MCF 10A (cell line): ENCODE measurements at regions of chr14 and their contacts with region 1.

Region 1: GRCh38 chr14:45267071-45267470 is 14.1 kb upstream of the MIS18BP1 start:
- DNase-seq: no peak
- H3K4me3 Mint-ChIP-seq: no peak overlapping the region
- H3K27ac Mint-ChIP-seq: peak overlapping the region; percentile 10
- H3K4me1 Mint-ChIP-seq: no peaks in the 10 kb centered on the region
- H3K27me3 Mint-ChIP-seq: no peaks in the 10 kb centered on the region
- CTCF ChIP-seq: no peak

Region 2: DNA sequence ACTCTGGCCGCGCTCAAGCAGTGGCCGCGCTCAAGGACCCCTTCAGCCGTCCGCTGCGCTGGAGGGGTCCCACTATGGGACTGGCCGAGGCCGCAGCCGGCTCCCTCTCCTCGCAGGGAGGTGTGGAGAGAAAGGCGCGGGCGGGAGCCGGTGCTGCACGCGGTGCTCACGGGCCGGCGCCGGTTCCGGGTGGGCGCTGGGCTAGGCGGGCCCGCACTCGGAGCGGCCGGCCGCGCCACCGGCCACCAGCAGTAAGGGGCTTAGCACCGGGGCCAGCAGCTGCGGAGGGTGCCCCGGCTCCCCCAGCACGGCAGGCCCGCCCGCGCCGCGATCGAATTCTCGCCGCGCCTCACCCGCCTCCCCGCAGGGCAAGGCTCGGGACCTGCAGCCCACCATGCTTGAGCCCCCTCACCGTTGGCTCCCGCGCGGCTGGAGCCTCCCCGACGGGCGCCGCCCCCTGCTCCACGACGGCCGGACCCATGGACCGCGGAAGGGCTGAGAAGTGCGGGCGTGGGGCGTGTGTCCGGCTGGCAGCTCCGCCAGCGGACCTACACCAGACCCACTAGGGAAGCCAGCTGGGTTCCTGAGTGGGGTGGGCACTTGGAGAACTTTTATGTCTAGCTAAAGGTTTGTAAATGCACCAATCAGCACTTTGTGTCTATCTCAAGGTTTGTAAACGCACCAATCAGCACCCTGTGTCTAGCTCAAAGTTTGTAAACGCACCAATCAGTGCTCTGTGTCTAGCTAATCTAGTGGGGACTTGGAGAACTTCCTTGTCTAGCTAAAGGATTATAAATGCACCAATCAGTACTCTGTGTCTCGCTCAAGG is 354.8 kb before region 1 on chr14:
- CTCF ChIA-PET with region 1: interaction called, 136 read pairs
- POLR2A ChIA-PET with region 1: interaction called, 10 read pairs
- intact Hi-C with region 1: loop called (anchors 1 kb)
- DNase-seq: no peak
- H3K4me3 Mint-ChIP-seq: no peak overlapping the region
- H3K27ac Mint-ChIP-seq: no peak overlapping the region
- H3K4me1 Mint-ChIP-seq: no peaks in the 10 kb centered on the region
- H3K27me3 Mint-ChIP-seq: no peaks in the 10 kb centered on the region
- CTCF ChIP-seq: no peak

Region 3: DNA sequence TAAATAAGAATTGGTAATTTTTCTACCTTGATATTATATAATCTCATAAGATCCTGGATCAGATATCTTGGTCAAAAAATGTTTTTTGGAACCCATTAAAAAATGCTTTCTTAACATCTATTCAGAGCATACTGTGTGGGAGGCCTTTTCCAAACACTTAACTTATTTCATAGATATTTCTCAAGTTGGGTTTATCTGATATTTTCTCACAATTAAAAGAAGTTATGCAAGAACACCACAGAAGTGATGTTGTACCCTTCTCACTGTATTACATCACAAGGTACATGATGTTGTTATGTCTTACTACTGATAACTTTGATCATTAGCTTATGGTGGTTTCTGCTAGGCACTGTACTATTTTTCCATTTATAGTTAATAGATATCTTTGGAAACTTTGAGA is 206.5 kb before region 1 on chr14:
- CTCF ChIA-PET with region 1: no interaction called
- POLR2A ChIA-PET with region 1: no interaction called
- intact Hi-C with region 1: no loop called
- DNase-seq: no peak
- H3K4me3 Mint-ChIP-seq: no peak overlapping the region
- H3K27ac Mint-ChIP-seq: no peak overlapping the region
- H3K4me1 Mint-ChIP-seq: no peaks in the 10 kb centered on the region
- H3K27me3 Mint-ChIP-seq: no peaks in the 10 kb centered on the region
- CTCF ChIP-seq: no peak

Region 4: GRCh38 chr14:45112889-45113781 is 153.9 kb before region 1 on chr14:
- CTCF ChIA-PET with region 1: interaction called, 10 read pairs
- POLR2A ChIA-PET with region 1: no interaction called
- intact Hi-C with region 1: no loop called
- DNase-seq: no peak
- H3K4me3 Mint-ChIP-seq: no peak overlapping the region
- H3K27ac Mint-ChIP-seq: peak overlapping the region; percentile 3
- H3K4me1 Mint-ChIP-seq: no peaks in the 10 kb centered on the region
- H3K27me3 Mint-ChIP-seq: no peaks in the 10 kb centered on the region
- CTCF ChIP-seq: no peak

Region 5: DNA sequence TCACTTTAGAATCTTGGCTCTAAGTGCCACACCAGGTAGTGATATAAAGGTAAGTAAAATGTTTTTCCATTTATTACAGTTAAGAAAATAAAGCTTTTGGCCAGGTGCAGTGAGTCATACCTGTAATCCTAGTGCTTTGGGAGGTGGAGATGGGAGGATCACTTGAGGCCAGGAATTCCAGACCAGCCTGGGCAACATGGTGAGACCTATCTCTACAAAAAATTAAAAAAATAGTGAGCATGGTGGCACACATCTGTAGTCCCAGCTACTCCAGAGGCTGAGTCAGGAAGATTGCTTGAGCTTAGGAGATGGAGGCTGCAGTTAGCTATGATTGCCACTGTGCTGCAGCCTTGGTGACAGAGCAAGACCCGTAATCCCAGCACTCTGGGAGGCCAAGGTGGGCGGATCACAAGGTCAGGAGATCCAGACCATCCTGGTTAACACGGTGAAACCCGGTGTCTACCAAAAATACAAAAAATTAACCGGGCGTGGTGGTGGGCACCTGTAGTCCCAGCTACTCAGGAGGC is 126.3 kb before region 1 on chr14:
- CTCF ChIA-PET with region 1: interaction called, 14 read pairs
- POLR2A ChIA-PET with region 1: no interaction called
- intact Hi-C with region 1: no loop called
- DNase-seq: peak; percentile 37
- H3K4me3 Mint-ChIP-seq: no peak overlapping the region
- H3K27ac Mint-ChIP-seq: no peak overlapping the region
- H3K4me1 Mint-ChIP-seq: peaks cover 24% of the 10 kb centered on the region
- H3K27me3 Mint-ChIP-seq: no peaks in the 10 kb centered on the region
- CTCF ChIP-seq: no peak

Region 6: GRCh38 chr14:45253068-45253753 is 13.9 kb before region 1 on chr14 and contains the start of gene MIS18BP1:
- CTCF ChIA-PET with region 1: interaction called, 67 read pairs
- POLR2A ChIA-PET with region 1: interaction called, 20 read pairs
- intact Hi-C with region 1: no loop called
- DNase-seq: peak; percentile 97
- H3K4me3 Mint-ChIP-seq: peak within 1 kb of the TSS; percentile 88
- H3K27ac Mint-ChIP-seq: peak within 1 kb of the TSS; percentile 99
- H3K4me1 Mint-ChIP-seq: peaks cover 11% of the 10 kb centered on the region
- H3K27me3 Mint-ChIP-seq: no peaks in the 10 kb centered on the region
- CTCF ChIP-seq: peak; percentile 80
- total RNA-seq, gene MIS18BP1: 24.2 and 31.6 TPM in 2 replicates

Region 7: GRCh38 chr14:45284802-45285201 is 17.7 kb after region 1 on chr14:
- CTCF ChIA-PET with region 1: interaction called, 21 read pairs
- POLR2A ChIA-PET with region 1: interaction called, 3 read pairs
- intact Hi-C with region 1: no loop called
- DNase-seq: no peak
- H3K4me3 Mint-ChIP-seq: no peak overlapping the region
- H3K27ac Mint-ChIP-seq: no peak overlapping the region
- H3K4me1 Mint-ChIP-seq: no peaks in the 10 kb centered on the region
- H3K27me3 Mint-ChIP-seq: no peaks in the 10 kb centered on the region
- CTCF ChIP-seq: no peak

Region 8: DNA sequence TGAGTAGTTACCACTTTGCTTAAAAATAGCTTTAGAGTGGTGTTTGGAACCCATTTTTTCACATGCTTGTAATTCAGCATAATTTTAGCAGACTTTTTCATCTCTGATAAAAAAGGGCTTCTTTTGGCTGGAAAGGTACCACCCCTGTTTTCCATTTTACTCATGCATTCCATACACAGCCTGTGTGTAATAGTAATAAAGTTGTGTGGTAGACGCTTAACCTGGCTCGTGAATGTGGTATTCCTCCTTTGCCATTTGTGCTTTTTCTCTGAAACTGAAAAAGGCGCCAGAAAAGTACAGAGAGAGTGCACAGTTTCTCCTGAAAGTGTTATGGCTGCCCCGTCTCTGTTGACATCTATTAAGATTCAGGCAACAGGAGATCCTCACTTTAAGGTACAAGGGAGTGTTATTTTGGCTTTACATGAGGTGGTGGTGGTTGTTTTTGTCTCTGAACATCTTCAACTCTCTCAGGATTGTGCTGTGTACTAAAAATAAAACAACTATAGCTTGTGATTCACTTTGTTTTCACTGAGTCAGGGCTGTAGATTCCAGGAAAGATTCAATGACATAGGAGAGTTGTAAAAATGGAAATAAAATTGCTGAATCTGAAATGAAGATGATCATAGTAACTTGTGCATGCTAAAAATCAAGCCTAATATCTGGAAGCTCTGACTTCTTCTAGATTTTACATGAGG is 31.5 kb after region 1 on chr14:
- CTCF ChIA-PET with region 1: interaction called, 10 read pairs
- POLR2A ChIA-PET with region 1: no interaction called
- intact Hi-C with region 1: no loop called
- DNase-seq: no peak
- H3K4me3 Mint-ChIP-seq: no peak overlapping the region
- H3K27ac Mint-ChIP-seq: no peak overlapping the region
- H3K4me1 Mint-ChIP-seq: peaks cover 7% of the 10 kb centered on the region
- H3K27me3 Mint-ChIP-seq: no peaks in the 10 kb centered on the region
- CTCF ChIP-seq: no peak